HCT116 (cell line): ENCODE measurements at regions of chr4 and their contacts with region 1.

Region 1: GRCh38 chr4:102430461-102430910 is 70.7 kb upstream of the NFKB1 start:
- DNase-seq: no peak
- ATAC-seq: no peak
- H3K4me3 ChIP-seq: peak overlapping the region; percentile 52 to 65
- H3K27ac ChIP-seq: peak overlapping the region; percentile 52; the same call in 1 of the 2 replicates
- H3K4me1 ChIP-seq: peaks cover 18 to 29% of the 10 kb centered on the region in 2 experiments; a peak in 3 of 4 replicates
- H3K27me3 ChIP-seq: no peaks in the 10 kb centered on the region
- CTCF ChIP-seq: no peak
- POLR2A ChIP-seq: no peak
- RAD21 ChIP-seq: no peak

Region 2: DNA sequence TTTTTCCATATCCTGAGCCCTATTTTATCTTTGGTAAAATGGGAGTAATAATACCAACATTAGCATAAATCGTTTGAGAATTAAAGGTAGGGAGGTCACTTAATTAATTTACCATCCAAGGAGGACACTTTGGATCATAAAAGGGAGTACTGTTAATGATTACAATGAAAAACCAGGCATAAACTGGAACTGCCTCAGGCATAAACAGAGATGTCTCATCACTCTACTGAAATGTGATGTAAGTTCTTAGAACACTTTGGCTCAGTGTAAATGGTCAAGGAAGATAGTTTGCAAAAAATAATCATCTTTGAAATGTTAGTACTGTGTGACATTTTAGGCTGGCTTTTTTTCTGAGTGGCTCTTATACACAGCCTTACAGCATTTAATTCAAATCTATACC is 353.9 kb before region 1 on chr4:
- CTCF ChIA-PET with region 1: no interaction called
- POLR2A ChIA-PET with region 1: no interaction called
- RAD21 ChIA-PET with region 1: no interaction called
- intact Hi-C with region 1: no loop called
- DNase-seq: no peak
- ATAC-seq: no peak
- H3K4me3 ChIP-seq: no peak overlapping the region
- H3K27ac ChIP-seq: no peak overlapping the region
- H3K4me1 ChIP-seq: no peaks in the 10 kb centered on the region
- H3K27me3 ChIP-seq: no peaks in the 10 kb centered on the region
- CTCF ChIP-seq: no peak
- POLR2A ChIP-seq: no peak
- RAD21 ChIP-seq: no peak

Region 3: DNA sequence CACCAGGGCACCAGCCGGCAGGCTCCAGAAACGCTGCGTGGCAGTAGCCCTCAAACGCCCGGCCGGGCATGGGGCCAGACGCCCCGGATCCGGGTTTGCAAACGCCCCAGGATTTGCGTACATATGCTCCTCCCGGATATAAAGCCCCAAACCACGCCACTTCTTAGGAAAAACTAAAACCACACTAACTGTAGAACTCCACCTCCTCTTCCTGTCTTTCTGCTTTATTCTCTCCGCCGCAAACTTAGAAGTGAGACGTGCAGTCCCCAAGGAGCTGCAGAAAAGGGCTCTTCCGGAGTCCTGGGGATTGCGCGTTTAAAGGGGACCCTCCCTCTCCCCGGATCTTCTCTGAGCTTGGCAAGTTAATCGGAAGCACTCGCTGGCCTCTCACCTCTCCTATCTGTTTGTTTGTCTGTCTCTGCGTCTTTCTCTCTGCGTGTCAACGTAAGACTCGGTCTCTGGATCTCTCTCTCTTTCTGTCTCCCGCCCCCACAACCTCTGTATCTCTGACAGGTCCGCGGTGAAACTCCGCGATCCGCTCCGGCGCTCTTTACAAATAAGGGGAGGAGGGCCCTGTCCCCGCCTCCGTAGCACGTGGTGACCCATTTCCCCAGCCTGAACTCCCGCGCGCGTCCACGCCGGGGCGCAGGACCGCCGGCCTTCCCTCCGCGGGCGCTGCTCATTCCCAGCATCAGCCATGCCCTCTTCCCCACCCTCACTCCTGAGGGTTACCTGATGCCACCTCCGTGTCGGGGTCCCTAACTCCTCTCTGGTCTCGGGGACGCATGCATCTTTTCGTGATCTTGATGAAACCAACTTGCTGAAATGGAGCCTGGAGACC is 85.3 kb before region 1 on chr4 and contains the start of gene SLC39A8:
- CTCF ChIA-PET with region 1: interaction called, 6 read pairs
- POLR2A ChIA-PET with region 1: no interaction called
- RAD21 ChIA-PET with region 1: no interaction called
- intact Hi-C with region 1: loop called (anchors 1 kb)
- DNase-seq: peak; percentile 66
- ATAC-seq: peak; percentile 84
- H3K4me3 ChIP-seq: peak within 1 kb of the TSS; percentile 59 to 65
- H3K27ac ChIP-seq: peak within 1 kb of the TSS; percentile 57; the same call in 1 of the 2 replicates
- H3K4me1 ChIP-seq: peaks cover 3 to 25% of the 10 kb centered on the region in 2 experiments; a peak in 3 of 4 replicates
- H3K27me3 ChIP-seq: no peaks in the 10 kb centered on the region
- CTCF ChIP-seq: peak; percentile 48 to 82 (median 72); a peak in 5 of 6 replicates
- POLR2A ChIP-seq: peak; percentile 48
- RAD21 ChIP-seq: peak; percentile 70
- total RNA-seq, gene SLC39A8: 13.2 TPM

Region 4: DNA sequence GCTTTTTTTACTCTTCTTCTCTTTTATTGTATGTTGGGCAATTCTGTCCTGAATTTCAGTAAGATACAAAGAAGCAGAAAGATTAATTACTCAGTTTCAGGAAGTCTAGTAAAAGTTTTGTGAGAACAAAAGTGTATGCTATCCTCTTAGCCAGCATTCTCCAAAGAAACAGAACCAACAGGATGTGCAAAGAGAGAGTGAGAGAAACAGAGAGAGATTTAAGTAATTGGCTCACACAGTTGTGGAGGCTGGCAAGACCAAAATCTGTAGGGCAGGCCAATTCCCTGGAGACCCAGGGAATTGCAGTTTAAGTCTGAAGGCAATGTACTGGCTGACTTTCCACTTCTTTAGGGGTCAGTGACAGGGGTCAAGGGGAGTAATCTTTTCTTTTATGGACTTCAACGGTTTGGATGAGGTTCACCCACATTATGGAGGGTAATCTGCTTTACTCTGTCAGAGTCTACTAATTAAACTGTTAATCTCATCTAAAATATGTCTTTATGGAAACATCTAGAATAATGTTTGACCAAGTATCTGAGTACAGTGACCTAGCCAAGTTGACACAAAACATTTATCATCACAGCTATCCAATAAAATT is 26.0 kb before region 1 on chr4:
- CTCF ChIA-PET with region 1: no interaction called
- POLR2A ChIA-PET with region 1: no interaction called
- RAD21 ChIA-PET with region 1: no interaction called
- intact Hi-C with region 1: no loop called
- DNase-seq: no peak
- ATAC-seq: no peak
- H3K4me3 ChIP-seq: no peak overlapping the region
- H3K27ac ChIP-seq: no peak overlapping the region
- H3K4me1 ChIP-seq: no peaks in the 10 kb centered on the region
- H3K27me3 ChIP-seq: no peaks in the 10 kb centered on the region
- CTCF ChIP-seq: no peak
- POLR2A ChIP-seq: no peak
- RAD21 ChIP-seq: no peak

Region 5: GRCh38 chr4:102441978-102442911 is 11.8 kb after region 1 on chr4:
- CTCF ChIA-PET with region 1: interaction called, 10 read pairs
- POLR2A ChIA-PET with region 1: no interaction called
- RAD21 ChIA-PET with region 1: no interaction called
- intact Hi-C with region 1: no loop called
- DNase-seq: no peak
- ATAC-seq: no peak
- H3K4me3 ChIP-seq: no peak overlapping the region
- H3K27ac ChIP-seq: no peak overlapping the region
- H3K4me1 ChIP-seq: no peaks in the 10 kb centered on the region
- H3K27me3 ChIP-seq: no peaks in the 10 kb centered on the region
- CTCF ChIP-seq: no peak
- POLR2A ChIP-seq: no peak
- RAD21 ChIP-seq: no peak